ENCODE measurements at regions of chr7 and their contacts with region 1.

Region 1: DNA sequence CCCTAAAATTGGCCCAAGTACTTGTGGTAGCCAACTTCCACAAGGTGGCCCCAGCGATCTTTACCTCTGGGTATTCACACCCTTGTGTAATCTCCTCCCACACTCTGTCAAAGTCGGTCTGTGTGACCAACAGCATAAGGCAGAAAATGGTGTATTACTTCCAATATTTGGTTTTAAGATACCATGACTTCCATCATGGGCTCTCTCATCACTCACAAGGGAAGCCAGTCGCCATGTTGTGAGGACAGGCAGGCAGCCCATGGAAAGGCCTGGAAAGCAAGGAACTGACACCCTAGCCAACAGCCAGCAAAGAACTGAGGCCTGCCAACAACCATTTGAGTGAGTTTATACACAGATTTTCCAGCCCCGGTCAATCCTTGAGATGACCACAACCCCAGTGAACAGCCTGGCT is 91.0 kb upstream of the KMT2E start:
- DNase-seq: peak; percentile 64
- H3K4me3 Mint-ChIP-seq: no peak overlapping the region
- H3K27ac Mint-ChIP-seq: no peak overlapping the region
- H3K4me1 Mint-ChIP-seq: peaks cover 7% of the 10 kb centered on the region
- H3K27me3 Mint-ChIP-seq: peaks cover 11% of the 10 kb centered on the region

Region 2: DNA sequence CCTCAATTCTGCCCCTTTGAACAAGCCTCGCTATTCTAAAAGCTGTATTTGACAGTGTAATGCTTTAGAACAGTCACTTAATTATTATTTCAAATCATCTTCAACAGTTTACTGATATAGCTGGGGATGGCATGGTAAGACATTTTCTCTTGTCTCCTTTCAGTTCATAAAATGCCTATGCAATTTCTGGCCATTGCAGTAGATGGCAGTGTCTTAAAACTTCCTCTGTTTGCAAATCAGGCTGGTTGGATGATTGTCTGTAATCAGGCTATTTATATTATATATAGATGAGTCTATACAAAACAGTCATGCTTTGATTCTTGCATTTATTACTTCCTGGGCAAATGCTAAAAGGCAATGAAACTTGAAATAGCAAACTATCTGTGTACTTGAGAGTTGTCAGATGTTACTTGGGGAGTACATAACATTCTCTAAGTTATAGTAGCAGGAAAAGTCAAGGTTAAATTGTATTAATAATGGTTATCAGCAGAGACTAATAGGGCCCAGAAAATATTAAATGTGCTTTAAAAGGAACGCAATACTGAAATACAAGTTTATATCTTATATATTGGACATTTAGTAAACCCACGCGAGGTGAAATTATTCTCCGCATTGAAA is 650.1 kb before region 1 on chr7:
- intact Hi-C with region 1: loop called (anchors 2 kb)
- DNase-seq: no peak
- H3K4me3 Mint-ChIP-seq: no peak overlapping the region
- H3K27ac Mint-ChIP-seq: no peak overlapping the region
- H3K4me1 Mint-ChIP-seq: peaks cover 4% of the 10 kb centered on the region
- H3K27me3 Mint-ChIP-seq: peaks cover 6% of the 10 kb centered on the region

Region 3: GRCh38 chr7:104805449-104806317 is 117.3 kb before region 1 on chr7:
- intact Hi-C with region 1: no loop called
- DNase-seq: no peak
- H3K4me3 Mint-ChIP-seq: no peak overlapping the region
- H3K27ac Mint-ChIP-seq: no peak overlapping the region
- H3K4me1 Mint-ChIP-seq: no peaks in the 10 kb centered on the region
- H3K27me3 Mint-ChIP-seq: peaks cover 4% of the 10 kb centered on the region

Region 4: DNA sequence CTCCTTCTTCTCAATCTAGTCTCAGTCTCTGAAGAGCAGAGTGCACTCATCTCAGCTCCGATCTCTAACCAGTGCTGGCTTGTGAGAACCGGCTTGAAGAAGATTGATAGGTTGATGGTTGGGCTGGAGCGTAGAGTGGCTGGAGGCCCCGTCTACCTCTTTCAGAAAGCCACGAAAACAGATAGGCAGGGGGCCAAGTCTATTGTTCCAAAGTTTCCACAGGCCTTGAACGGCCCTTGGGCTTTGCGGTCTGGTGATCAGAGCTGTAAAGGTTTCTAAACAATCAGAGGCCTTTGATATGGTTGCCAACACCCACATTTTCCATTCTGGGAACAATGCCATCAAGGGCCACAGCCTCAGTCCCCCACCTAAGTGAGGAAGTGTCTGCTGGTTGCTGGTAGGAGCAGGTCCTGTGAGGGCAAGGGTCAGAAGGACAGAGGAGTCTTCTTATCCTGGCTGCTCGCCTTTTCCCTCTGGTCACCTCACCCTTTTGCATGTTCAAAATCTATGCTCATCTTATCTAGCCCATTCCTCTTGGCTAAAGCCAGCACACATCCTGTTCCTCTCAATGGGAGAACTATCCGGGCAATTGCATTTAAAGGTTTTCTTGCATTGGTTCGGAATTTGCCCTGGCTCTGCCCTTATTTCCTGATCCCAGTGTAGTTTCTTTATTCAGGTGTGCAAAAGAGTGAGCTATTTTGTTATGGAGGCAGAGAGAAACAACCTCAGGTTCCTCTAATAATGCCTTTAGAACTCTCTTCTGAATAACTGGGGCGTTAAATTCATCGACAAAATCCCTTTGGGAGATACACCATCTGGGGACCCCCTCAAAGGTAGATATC is 20.7 kb after region 1 on chr7:
- intact Hi-C with region 1: loop called (anchors 1 kb)
- DNase-seq: peak; percentile 70
- H3K4me3 Mint-ChIP-seq: peak overlapping the region; percentile 96
- H3K27ac Mint-ChIP-seq: peak overlapping the region; percentile 100
- H3K4me1 Mint-ChIP-seq: peaks cover 72% of the 10 kb centered on the region
- H3K27me3 Mint-ChIP-seq: peaks cover 2% of the 10 kb centered on the region

Region 5: GRCh38 chr7:105013221-105013815 is 90.3 kb after region 1 on chr7:
- intact Hi-C with region 1: loop called (anchors 1 kb)
- DNase-seq: peak; percentile 92
- H3K4me3 Mint-ChIP-seq: peak overlapping the region; percentile 99
- H3K27ac Mint-ChIP-seq: peak overlapping the region; percentile 96
- H3K4me1 Mint-ChIP-seq: peaks cover 43% of the 10 kb centered on the region
- H3K27me3 Mint-ChIP-seq: peaks cover 3% of the 10 kb centered on the region

Region 6: GRCh38 chr7:105098863-105099515 is 176.0 kb after region 1 on chr7:
- intact Hi-C with region 1: loop called (anchors 2 kb)
- DNase-seq: no peak
- H3K4me3 Mint-ChIP-seq: no peak overlapping the region
- H3K27ac Mint-ChIP-seq: peak overlapping the region; percentile 84
- H3K4me1 Mint-ChIP-seq: peaks cover 52% of the 10 kb centered on the region
- H3K27me3 Mint-ChIP-seq: no peaks in the 10 kb centered on the region

Region 7: GRCh38 chr7:105531792-105532671 is 609.0 kb after region 1 on chr7 and contains the start of gene RINT1:
- intact Hi-C with region 1: loop called (anchors 1 kb)
- DNase-seq: peak; percentile 85
- H3K4me3 Mint-ChIP-seq: peak within 1 kb of the TSS; percentile 93
- H3K27ac Mint-ChIP-seq: peak within 1 kb of the TSS; percentile 95
- H3K4me1 Mint-ChIP-seq: peaks cover 21% of the 10 kb centered on the region
- H3K27me3 Mint-ChIP-seq: peaks cover 1% of the 10 kb centered on the region
- total RNA-seq, gene RINT1: 21.9 and 32.5 TPM in 2 replicates

Measured in activated T-helper 1 cell treated with anti-CD3 and anti-CD28 coated beads, Interleukin-12 subunit alpha, Interleukin-12 subunit beta, Interleukin-2, Interleukin-4 antibody, amounts not matched to agents 30 ng/mL and 10 ng/mL and 1 ng/mL, durations not matched to agents 14 hours and 24 hours and 36 hours (primary cell).